Left cardiac atrium (tissue), 4 donors: ENCODE measurements at regions of chr20 and their contacts with region 1.

Region 1: GRCh38 chr20:47272893-47273590 is 83.5 kb downstream of the ZMYND8 start:
- DNase-seq: no peak
- ATAC-seq: peak; percentile 51 to 76

Region 2: DNA sequence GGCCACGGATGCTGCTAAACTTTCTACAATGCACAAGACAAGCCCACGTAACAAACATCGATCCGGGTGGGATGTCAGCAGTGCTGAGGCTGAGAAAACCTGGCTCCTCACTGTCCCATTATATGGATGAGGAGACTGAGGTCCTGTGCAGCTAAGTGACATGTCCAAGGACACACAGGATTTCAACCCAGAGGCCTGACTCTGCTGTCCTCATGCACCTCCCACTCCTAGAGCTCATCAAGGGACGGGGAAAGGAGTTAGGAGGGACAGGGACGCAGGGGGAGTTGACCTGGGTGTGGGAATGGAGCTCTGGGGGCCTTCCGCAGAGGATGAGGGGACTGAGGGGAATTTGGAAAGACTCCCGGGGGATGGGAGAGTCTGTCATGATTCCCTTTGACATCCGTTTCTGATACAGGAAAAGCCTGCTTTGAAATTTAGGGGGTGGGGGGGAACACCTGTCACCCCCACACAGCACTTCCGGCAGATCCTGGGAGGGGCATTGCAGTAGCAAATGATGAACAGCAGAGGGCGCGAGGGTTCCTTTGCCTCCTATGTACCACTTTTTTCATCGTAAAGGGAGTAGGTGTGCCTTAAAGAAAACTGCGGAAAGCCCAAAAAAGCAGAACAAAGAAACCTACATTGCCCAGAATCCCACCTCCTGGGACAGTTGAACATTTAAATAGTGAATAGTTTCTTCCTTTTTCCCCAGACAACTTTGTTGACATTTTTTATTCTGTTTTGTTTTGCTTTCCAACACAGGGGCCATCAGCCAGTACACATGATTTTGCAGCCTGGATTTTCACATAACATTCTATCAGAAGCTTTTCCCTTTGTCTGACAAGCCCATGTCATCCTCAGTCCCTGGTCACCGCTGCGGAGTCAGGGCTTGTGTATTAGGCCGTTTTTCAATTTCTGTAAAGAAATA is 515.0 kb before region 1 on chr20:
- intact Hi-C with region 1: loop called in 1 of 2 experiments (anchors 5 kb)
- DNase-seq: peak; percentile 38
- ATAC-seq: peak in 1 of 2 donors; percentile 54

Region 3: DNA sequence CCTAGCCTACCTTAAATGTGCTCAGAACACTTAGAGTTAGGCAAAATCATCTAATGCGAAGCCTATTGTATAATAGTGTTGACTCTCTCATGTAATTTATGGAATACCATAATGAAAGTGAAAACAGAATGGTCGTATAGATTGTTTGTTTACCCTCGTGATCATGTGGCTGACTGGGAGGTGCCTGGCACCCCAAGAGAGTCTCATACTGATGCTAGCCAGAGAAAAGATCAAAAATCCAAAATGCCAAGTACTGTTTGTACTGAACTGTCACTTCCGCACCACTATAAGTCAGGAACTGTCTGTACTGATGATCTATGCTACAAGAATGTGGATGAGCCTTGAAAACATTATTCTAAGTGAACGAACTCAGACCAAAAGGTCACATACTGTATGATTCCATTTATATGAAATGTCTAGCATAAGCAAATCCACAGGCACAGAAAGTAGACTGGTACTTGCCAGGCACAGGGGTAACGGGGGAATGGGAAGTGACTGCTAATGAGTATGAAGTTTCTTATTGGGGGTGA is 61.0 kb after region 1 on chr20:
- intact Hi-C with region 1: no loop called
- DNase-seq: no peak
- ATAC-seq: peak; percentile 56 to 75

Region 4: GRCh38 chr20:47356526-47357295 is 83.7 kb after region 1 on chr20 and contains the start of gene ZMYND8:
- intact Hi-C with region 1: loop called in 1 of 2 experiments (anchors 5 kb)
- DNase-seq: peak; percentile 87
- ATAC-seq: peak; percentile 67 to 71
- total RNA-seq, gene ZMYND8: 22.6 to 27.5 TPM

Region 5: GRCh38 chr20:47493175-47493962 is 220.3 kb after region 1 on chr20:
- intact Hi-C with region 1: loop called in 1 of 2 experiments (anchors 10 kb)
- DNase-seq: peak; percentile 91
- ATAC-seq: peak; percentile 96 to 97

Region 6: GRCh38 chr20:47620808-47621805 is 348.1 kb after region 1 on chr20:
- intact Hi-C with region 1: loop called (anchors 2 to 10 kb)
- DNase-seq: no peak
- ATAC-seq: peak in 1 of 2 donors; percentile 34

Region 7: DNA sequence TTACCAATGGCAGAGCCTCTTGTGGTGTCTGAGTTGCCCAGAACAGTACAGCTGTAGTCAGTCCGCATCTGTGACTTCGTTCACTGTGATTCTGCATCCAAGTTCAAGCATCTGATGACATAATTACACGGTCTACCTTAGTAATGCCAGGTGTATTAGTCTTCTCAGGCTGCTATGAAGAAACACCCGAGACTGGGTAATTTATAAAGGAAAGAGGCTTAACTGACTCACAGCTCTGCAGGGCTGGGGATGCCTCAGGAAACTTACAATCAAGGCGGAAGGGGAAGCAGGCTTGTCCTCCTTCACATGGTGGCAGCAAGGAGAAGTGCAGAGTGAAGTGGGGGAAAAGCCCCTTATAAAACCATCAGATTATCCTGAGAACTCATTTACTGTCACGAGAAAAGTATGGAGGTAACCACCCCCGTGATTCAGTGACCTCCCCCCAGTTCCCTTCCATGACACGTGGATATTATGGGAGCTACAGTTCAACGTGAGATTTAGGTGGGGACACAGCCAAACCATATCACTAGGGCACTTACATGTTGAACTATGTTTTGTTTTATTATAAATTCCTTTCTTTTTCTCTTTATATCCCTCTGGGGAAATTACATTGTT is 676.3 kb after region 1 on chr20:
- intact Hi-C with region 1: no loop called
- DNase-seq: no peak
- ATAC-seq: no peak